ENCODE measurements at regions of chrX and their contacts with region 1.

Region 1: GRCh38 chrX:49163555-49164419 is 1.2 kb downstream of the MAGIX start:
- DNase-seq: peak; percentile 88
- ATAC-seq: peak; percentile 65
- H3K4me3 ChIP-seq: peak overlapping the region; percentile 69
- H3K27ac ChIP-seq: peak overlapping the region; percentile 79
- H3K4me1 ChIP-seq: peaks cover 22% of the 10 kb centered on the region
- H3K27me3 ChIP-seq: no peaks in the 10 kb centered on the region
- CTCF ChIP-seq: peak; percentile 66

Region 2: DNA sequence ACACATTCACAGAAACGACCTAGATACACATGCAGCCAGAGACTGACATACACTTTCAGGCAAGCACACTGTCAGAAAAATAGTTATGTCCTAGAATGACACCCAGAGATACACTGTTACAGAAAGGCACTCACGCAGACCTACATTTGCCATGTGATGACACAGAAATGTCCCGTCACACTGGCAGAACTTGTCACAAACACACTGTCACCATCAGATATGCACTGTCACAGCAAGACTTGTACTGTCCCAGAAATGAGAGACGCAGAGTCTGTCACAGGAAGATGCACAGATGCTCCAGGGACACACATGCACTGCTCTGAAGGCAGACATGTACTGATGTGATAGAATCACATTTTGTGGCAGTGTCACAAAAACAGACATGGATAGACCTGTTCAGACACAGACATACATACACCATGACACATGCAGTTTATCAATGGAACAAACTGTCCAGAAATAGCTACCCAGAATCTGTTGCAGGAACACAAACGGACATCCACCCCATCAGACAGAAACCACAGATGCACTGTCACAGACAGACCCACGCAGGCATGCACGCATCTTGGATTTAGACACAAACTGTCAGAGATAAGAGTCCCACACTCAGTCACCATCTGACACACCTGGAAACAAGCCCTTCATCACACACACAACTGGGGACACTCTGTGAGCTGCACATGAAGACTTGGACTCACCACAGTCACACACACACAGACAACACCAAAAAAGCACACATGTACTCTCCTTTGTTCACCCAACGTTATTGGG is 243.7 kb before region 1 on chrX:
- CTCF ChIA-PET with region 1: no interaction called
- POLR2A ChIA-PET with region 1: no interaction called
- intact Hi-C with region 1: no loop called
- DNase-seq: no peak
- ATAC-seq: peak; percentile 2; the same call in 1 of the 2 replicates
- H3K4me3 ChIP-seq: peak overlapping the region; percentile 90; the same call in 1 of the 2 replicates
- H3K27ac ChIP-seq: no peak overlapping the region
- H3K4me1 ChIP-seq: peaks cover 13% of the 10 kb centered on the region
- H3K27me3 ChIP-seq: no peaks in the 10 kb centered on the region
- CTCF ChIP-seq: no peak

Region 3: GRCh38 chrX:49089336-49089952 is 74.3 kb before region 1 on chrX:
- CTCF ChIA-PET with region 1: no interaction called
- POLR2A ChIA-PET with region 1: no interaction called
- intact Hi-C with region 1: no loop called
- DNase-seq: no peak
- ATAC-seq: no peak
- H3K4me3 ChIP-seq: no peak overlapping the region
- H3K27ac ChIP-seq: no peak overlapping the region
- H3K4me1 ChIP-seq: no peaks in the 10 kb centered on the region
- H3K27me3 ChIP-seq: no peaks in the 10 kb centered on the region
- CTCF ChIP-seq: no peak

Region 4: DNA sequence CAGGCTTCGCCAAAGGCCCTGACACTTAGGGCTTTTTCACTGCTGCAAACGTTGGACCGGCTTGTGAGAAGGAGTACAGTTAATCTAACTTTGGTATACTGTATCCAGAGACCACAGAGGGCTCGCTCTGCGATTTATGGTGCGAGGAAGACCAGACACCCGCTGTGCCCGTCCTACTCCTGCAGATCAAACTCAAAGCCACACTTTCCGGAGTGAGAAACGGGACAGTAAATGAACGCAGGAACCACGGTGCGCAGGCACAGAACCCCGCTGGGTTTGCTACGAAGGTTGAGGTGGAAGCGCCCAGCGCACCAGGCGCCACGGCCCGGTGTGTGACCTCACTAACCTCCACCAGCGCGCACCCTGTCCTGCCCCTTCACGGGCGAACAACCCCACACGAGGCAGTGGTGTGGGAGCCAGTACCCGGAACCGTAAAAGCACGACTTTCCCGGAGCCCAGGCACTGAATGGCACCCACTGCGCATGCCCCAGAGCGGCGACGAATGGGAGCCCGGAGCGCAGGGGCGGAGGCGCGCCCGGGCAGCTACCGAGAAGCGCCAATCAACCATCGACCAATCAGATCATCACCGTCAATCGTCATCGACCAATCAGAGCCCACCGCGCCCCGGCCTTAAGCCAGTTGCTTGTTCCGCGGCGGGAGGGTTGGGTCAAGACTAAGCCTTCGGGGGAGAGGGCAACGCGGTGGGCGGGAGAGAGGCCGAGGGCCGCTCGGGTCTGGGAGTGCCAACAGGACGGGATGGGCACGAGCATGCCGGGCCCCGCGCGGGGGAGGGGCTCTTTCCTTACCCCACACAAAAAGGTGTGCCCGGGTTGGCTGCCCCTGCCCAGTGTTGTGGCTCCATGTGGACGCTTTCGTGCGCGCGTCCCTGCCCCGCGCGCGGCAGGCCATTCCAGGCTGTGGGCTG is 62.8 kb before region 1 on chrX:
- CTCF ChIA-PET with region 1: no interaction called
- POLR2A ChIA-PET with region 1: no interaction called
- intact Hi-C with region 1: loop called (anchors 2 kb)
- DNase-seq: peak; percentile 94
- ATAC-seq: peak; percentile 88
- H3K4me3 ChIP-seq: peak overlapping the region; percentile 95
- H3K27ac ChIP-seq: peak overlapping the region; percentile 70
- H3K4me1 ChIP-seq: peaks cover 3% of the 10 kb centered on the region; the same call in 1 of the 2 replicates
- H3K27me3 ChIP-seq: no peaks in the 10 kb centered on the region
- CTCF ChIP-seq: no peak

Region 5: GRCh38 chrX:49120099-49120498 is 43.7 kb before region 1 on chrX:
- CTCF ChIA-PET with region 1: no interaction called
- POLR2A ChIA-PET with region 1: no interaction called
- intact Hi-C with region 1: loop called (anchors 5 kb)
- DNase-seq: no peak
- ATAC-seq: no peak
- H3K4me3 ChIP-seq: no peak overlapping the region
- H3K27ac ChIP-seq: no peak overlapping the region
- H3K4me1 ChIP-seq: peaks cover 6% of the 10 kb centered on the region; the same call in 1 of the 2 replicates
- H3K27me3 ChIP-seq: no peaks in the 10 kb centered on the region
- CTCF ChIP-seq: no peak; the same call in 1 of the 2 replicates

Region 6: DNA sequence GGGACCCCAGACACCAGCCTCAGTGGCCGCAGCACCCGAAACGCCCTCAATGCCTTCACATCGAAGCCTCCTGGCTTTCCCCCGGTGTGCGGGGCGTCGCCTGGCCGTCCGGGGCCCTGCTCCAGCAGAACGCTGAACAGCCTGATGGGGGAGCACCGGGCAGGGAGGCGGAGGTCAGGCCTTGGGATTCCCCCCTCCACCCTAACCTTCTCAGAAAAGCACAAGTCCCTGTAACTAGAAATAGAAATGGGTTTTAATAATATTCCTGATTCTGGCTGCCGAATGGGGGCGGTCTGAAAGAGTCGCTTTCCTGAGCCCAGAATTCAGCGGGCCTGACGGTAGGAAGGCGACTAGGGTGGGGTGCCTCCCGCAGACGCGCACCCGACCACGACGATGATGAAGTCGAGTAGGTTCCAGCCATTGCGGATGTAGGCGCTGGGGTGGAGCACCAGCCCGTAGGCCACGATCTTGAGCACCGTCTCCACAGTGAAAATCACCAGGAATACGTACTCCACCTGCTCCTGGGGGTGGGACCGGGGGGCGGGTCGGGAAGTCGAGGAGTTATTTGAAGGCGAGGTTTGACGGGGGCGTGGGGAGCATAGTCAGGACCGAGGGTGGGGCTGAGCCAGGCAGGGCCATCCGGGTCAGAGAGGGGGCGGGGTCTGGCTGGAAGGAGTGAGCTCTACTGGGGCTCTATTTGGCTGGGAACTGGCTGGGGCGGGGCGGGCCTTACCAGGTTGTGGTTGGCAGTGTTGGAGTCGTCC is 66.9 kb after region 1 on chrX:
- CTCF ChIA-PET with region 1: no interaction called
- POLR2A ChIA-PET with region 1: no interaction called
- intact Hi-C with region 1: no loop called
- DNase-seq: no peak
- ATAC-seq: no peak
- H3K4me3 ChIP-seq: no peak overlapping the region
- H3K27ac ChIP-seq: no peak overlapping the region
- H3K4me1 ChIP-seq: no peaks in the 10 kb centered on the region
- H3K27me3 ChIP-seq: no peaks in the 10 kb centered on the region
- CTCF ChIP-seq: no peak